H1 (cell line): ENCODE measurements at regions of chr12 and their contacts with region 1.

Region 1: GRCh38 chr12:14257734-14258574 is 107.5 kb upstream of the ATF7IP start:
- DNase-seq: peak; percentile 96 to 97
- H3K4me3 ChIP-seq: peak overlapping the region in 3 of 4 experiments; percentile 9 to 39 (median 20); a peak in 3 of 8 replicates
- H3K27ac ChIP-seq: peak overlapping the region; percentile 95
- H3K4me1 ChIP-seq: peaks cover 19 to 34% (median 27%) of the 10 kb centered on the region in 4 experiments
- H3K27me3 ChIP-seq: no peaks in the 10 kb centered on the region
- CTCF ChIP-seq: no peak
- EP300 ChIP-seq: peak in 1 of 2 experiments; percentile 91; a peak in 2 of 3 replicates
- POLR2A ChIP-seq: peak; percentile 24 to 83
- RAD21 ChIP-seq: peak in 1 of 2 experiments; percentile 47

Region 2: DNA sequence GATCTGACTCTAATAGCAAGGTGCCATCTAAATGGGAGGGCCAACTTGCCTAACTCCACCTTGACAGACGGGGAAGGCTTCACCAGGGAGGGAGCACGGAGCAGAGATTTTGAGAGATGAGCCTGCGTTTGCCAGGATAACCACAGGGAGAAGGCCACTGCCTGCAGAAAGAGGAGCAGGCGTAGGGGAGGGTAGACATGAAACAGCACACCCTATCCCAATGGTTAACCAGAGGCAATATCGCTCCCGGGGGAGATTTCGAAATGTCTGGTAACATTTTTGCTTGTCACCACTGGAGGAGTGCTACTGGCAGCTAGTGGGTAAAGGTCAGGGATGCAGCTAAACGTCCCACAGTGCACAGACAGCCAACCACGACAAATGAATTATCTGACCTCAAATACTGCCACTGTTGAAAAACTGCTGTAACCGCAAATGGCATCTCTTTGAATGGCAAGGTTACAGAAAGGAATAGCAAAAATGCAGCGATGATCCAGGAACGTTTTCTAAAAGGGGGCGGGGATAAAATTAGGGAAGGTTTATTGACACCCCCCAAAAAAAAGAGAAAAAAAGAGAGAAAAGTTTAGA is 18.5 kb before region 1 on chr12:
- CTCF ChIA-PET with region 1: interaction called, 58 read pairs
- POLR2A ChIA-PET with region 1: interaction called, 13 read pairs
- DNase-seq: peak in 1 of 2 experiments; percentile 61
- H3K4me3 ChIP-seq: peak overlapping the region in 1 of 4 experiments; percentile 26; a peak in 1 of 8 replicates
- H3K27ac ChIP-seq: no peak overlapping the region; the same call in 1 of the 2 replicates
- H3K4me1 ChIP-seq: peaks cover 2 to 12% (median 5%) of the 10 kb centered on the region in 4 experiments; a peak in 6 of 7 replicates
- H3K27me3 ChIP-seq: no peaks in the 10 kb centered on the region
- CTCF ChIP-seq: peak in 2 of 3 experiments; percentile 6 to 21; a peak in 2 of 4 replicates
- EP300 ChIP-seq: no peak
- POLR2A ChIP-seq: 0 out of 3 replicates have a peak, but pooled peaks of 1 of the 2 experiments have one; percentile 27
- RAD21 ChIP-seq: peak; percentile 22 to 35

Region 3: GRCh38 chr12:14272956-14273907 is 15.3 kb after region 1 on chr12:
- CTCF ChIA-PET with region 1: interaction called, 5 read pairs
- POLR2A ChIA-PET with region 1: interaction called, 20 read pairs
- DNase-seq: no peak
- H3K4me3 ChIP-seq: no peak overlapping the region
- H3K27ac ChIP-seq: no peak overlapping the region
- H3K4me1 ChIP-seq: no peaks in the 10 kb centered on the region; a peak in 3 of 7 replicates
- H3K27me3 ChIP-seq: no peaks in the 10 kb centered on the region; a peak in 2 of 7 replicates
- CTCF ChIP-seq: no peak
- EP300 ChIP-seq: no peak
- POLR2A ChIP-seq: no peak
- RAD21 ChIP-seq: no peak

Region 4: GRCh38 chr12:14365294-14366208 is 107.6 kb after region 1 on chr12 and contains the start of gene ATF7IP:
- CTCF ChIA-PET with region 1: interaction called, 9 read pairs
- POLR2A ChIA-PET with region 1: interaction called, 164 read pairs
- DNase-seq: peak; percentile 88 to 93
- H3K4me3 ChIP-seq: peak within 1 kb of the TSS; percentile 65 to 90 (median 73)
- H3K27ac ChIP-seq: peak within 1 kb of the TSS; percentile 91
- H3K4me1 ChIP-seq: peaks cover 0 to under 1% (median 0%) of the 10 kb centered on the region in 4 experiments; a peak in 1 of 7 replicates
- H3K27me3 ChIP-seq: no peaks in the 10 kb centered on the region
- CTCF ChIP-seq: peak in 1 of 3 experiments; percentile 17; a peak in 2 of 4 replicates
- EP300 ChIP-seq: peak in 1 of 2 experiments; percentile 66; a peak in 1 of 3 replicates
- POLR2A ChIP-seq: peak; percentile 93 to 98
- RAD21 ChIP-seq: peak; percentile 19 to 26; a peak in 2 of 4 replicates
- total RNA-seq, gene ATF7IP: 148 and 149 TPM in 2 replicates

Region 5: DNA sequence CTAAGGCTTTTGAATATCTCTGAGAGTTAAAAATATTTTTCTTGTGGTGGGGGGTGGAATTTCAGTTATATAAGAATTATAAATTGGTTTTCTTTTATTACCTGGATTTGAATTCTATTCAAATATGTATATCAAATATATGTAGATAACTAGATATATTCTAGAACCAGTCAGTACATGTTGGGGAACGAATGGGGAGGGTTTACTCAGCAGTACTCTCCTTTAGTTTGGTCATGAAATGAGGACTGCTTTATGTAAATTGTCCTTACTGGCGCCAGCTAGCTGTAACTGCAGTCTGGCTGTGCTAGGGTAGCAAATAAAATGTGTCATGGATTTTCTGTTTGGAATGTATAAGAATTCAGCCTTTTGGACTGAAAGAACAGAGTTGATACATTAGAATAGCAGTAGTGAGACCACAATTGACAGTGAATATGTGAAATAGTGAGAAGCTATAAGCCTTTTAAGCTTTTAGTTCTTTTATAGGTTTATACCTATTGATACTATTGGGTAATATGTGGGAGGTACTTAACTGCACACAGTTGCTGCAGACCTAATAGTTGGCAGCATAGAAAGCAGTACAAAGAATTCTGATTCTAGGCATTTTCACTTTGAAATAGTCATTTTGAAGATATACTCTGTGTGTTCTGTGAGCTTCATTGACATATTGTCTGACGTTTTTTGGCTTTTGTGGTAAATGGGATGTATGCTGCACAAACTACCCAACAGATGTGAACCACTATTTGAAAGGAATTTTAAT is 136.5 kb after region 1 on chr12:
- CTCF ChIA-PET with region 1: interaction called, 3 read pairs
- POLR2A ChIA-PET with region 1: interaction called, 12 read pairs
- DNase-seq: no peak
- H3K4me3 ChIP-seq: peak overlapping the region in 1 of 4 experiments; percentile 25; a peak in 1 of 8 replicates
- H3K27ac ChIP-seq: no peak overlapping the region
- H3K4me1 ChIP-seq: peaks cover 0 to 35% (median 4%) of the 10 kb centered on the region in 4 experiments; a peak in 4 of 7 replicates
- H3K27me3 ChIP-seq: no peaks in the 10 kb centered on the region
- CTCF ChIP-seq: no peak
- EP300 ChIP-seq: peak in 1 of 2 experiments; percentile 21; a peak in 1 of 3 replicates
- POLR2A ChIP-seq: no peak
- RAD21 ChIP-seq: no peak

Region 6: DNA sequence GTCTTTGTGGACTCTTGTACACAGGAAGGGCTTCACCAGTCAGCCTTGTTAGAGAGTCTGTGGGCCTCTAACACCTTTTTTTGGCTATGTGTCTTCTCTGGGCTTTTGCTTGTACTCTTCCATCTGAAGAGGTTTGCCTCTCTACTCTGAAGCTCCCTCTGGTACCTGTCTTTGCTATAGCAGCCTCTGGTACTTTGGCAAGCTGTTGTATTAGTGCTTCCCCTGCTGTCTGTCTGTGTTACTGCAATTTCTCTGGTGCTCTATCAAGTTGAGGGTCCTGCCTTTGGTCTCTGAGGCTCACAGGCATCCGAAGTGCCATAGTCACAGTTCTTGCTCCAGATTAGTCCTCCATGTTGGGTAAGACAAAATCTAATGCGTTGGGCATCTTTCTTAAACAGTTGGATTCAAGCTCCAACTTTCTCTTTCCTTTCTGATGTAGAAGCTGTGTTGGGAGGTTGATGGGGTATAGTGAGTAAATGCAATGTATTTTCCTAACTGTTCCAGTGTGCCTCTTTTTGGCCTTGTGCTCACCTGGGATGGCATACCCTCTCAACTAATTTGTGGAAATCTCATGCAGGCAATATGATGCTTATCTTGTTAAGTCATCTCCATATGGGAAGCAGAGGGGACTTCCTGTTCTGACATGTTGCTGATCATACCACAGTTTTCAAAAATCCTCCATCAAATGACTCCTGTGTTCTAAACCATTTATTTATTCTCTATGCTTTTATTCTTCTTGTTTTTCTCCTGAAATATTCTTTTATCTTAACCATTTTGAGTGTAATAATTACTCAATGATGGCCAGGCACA is 196.3 kb after region 1 on chr12:
- CTCF ChIA-PET with region 1: interaction called, 22 read pairs
- POLR2A ChIA-PET with region 1: interaction called, 6 read pairs
- DNase-seq: peak in 1 of 2 experiments; percentile 15
- H3K4me3 ChIP-seq: no peak overlapping the region
- H3K27ac ChIP-seq: no peak overlapping the region
- H3K4me1 ChIP-seq: peaks cover 0 to 5% (median 2%) of the 10 kb centered on the region in 4 experiments; a peak in 3 of 7 replicates
- H3K27me3 ChIP-seq: no peaks in the 10 kb centered on the region
- CTCF ChIP-seq: peak; percentile 28 to 99 (median 97)
- EP300 ChIP-seq: no peak
- POLR2A ChIP-seq: no peak
- RAD21 ChIP-seq: peak; percentile 93